CD4-positive, alpha-beta T cell (primary cell): ENCODE measurements at regions of chr21 and their contacts with region 1.

Region 1: DNA sequence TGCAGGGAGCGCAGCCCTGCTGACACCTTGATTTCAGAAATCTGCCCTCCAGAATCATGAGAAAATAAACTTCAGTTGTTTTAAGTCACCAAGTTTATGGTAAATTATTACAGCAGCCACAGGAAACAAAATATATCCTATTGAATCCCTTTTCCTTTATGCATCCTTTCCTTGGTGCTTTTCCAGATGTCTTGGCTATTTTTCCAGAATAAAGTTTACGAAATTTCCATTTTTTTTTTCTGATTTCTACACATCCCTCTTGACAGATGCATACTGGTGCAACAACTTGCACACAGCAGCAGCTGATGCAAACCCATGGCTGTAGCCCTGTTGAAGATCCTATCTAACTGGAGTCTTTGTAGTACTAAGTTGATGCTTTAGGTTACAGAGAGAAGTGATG is 111.1 kb upstream of the KCNE2 start:
- DNase-seq: no peak
- ATAC-seq: no peak
- H3K4me3 ChIP-seq: no peak overlapping the region
- H3K4me3 Mint-ChIP-seq: no peak overlapping the region
- H3K27ac ChIP-seq: no peak overlapping the region
- H3K27ac Mint-ChIP-seq: no peak overlapping the region
- H3K4me1 ChIP-seq: no peaks in the 10 kb centered on the region
- H3K4me1 Mint-ChIP-seq: no peaks in the 10 kb centered on the region
- H3K27me3 ChIP-seq: no peaks in the 10 kb centered on the region
- H3K27me3 Mint-ChIP-seq: no peaks in the 10 kb centered on the region
- CTCF ChIP-seq: no peak

Region 2: GRCh38 chr21:33915368-33916199 is 337.2 kb before region 1 on chr21 and contains the start of gene ATP5PO:
- CTCF ChIA-PET with region 1: no interaction called
- POLR2A ChIA-PET with region 1: no interaction called
- intact Hi-C with region 1: no loop called
- DNase-seq: peak; percentile 89 to 98 (median 94)
- ATAC-seq: peak; percentile 99
- H3K4me3 ChIP-seq: peak within 1 kb of the TSS; percentile 75
- H3K4me3 Mint-ChIP-seq: peak within 1 kb of the TSS; percentile 97
- H3K27ac ChIP-seq: peak within 1 kb of the TSS; percentile 37 to 66
- H3K27ac Mint-ChIP-seq: peak within 1 kb of the TSS; percentile 92
- H3K4me1 ChIP-seq: peaks cover 19% of the 10 kb centered on the region
- H3K4me1 Mint-ChIP-seq: peaks cover 38% of the 10 kb centered on the region
- H3K27me3 ChIP-seq: no peaks in the 10 kb centered on the region
- H3K27me3 Mint-ChIP-seq: no peaks in the 10 kb centered on the region
- CTCF ChIP-seq: no peak
- total RNA-seq, gene ATP5PO: 143 to 149 TPM

Region 3: GRCh38 chr21:34112316-34113033 is 140.3 kb before region 1 on chr21:
- CTCF ChIA-PET with region 1: no interaction called
- POLR2A ChIA-PET with region 1: no interaction called
- intact Hi-C with region 1: no loop called
- DNase-seq: no peak
- ATAC-seq: no peak
- H3K4me3 ChIP-seq: no peak overlapping the region
- H3K4me3 Mint-ChIP-seq: no peak overlapping the region
- H3K27ac ChIP-seq: no peak overlapping the region
- H3K27ac Mint-ChIP-seq: peak overlapping the region; percentile 5
- H3K4me1 ChIP-seq: no peaks in the 10 kb centered on the region
- H3K4me1 Mint-ChIP-seq: peaks cover 74% of the 10 kb centered on the region
- H3K27me3 ChIP-seq: no peaks in the 10 kb centered on the region
- H3K27me3 Mint-ChIP-seq: no peaks in the 10 kb centered on the region
- CTCF ChIP-seq: no peak

Region 4: DNA sequence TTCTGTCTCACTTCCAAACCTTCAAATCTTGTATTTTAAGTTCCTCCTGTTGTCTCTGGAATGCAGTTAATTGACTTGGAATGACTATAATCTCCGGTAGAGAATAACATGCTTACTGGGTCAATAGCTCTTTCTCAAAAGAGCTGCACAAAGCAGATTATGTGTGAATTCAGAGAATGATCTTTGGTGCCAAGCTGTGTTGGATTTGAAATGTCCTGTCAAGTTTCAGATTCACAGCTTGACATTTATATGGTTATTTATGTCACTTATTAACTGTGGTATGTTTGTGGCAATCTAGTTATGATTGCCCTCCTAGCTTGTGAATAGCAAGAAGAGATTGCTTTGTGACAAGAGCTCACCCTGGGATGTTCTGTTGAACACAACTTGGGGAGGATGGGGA is 17.2 kb before region 1 on chr21:
- CTCF ChIA-PET with region 1: no interaction called
- POLR2A ChIA-PET with region 1: no interaction called
- intact Hi-C with region 1: no loop called
- DNase-seq: no peak
- ATAC-seq: no peak
- H3K4me3 ChIP-seq: no peak overlapping the region
- H3K4me3 Mint-ChIP-seq: no peak overlapping the region
- H3K27ac ChIP-seq: no peak overlapping the region
- H3K27ac Mint-ChIP-seq: no peak overlapping the region
- H3K4me1 ChIP-seq: no peaks in the 10 kb centered on the region
- H3K4me1 Mint-ChIP-seq: no peaks in the 10 kb centered on the region
- H3K27me3 ChIP-seq: no peaks in the 10 kb centered on the region
- H3K27me3 Mint-ChIP-seq: peaks cover 8% of the 10 kb centered on the region
- CTCF ChIP-seq: no peak

Region 5: GRCh38 chr21:34313116-34313515 is 60.4 kb after region 1 on chr21:
- CTCF ChIA-PET with region 1: no interaction called
- POLR2A ChIA-PET with region 1: no interaction called
- intact Hi-C with region 1: loop called in 1 of 2 experiments (anchors 10 kb)
- DNase-seq: no peak
- ATAC-seq: no peak
- H3K4me3 ChIP-seq: no peak overlapping the region
- H3K4me3 Mint-ChIP-seq: no peak overlapping the region
- H3K27ac ChIP-seq: no peak overlapping the region
- H3K27ac Mint-ChIP-seq: no peak overlapping the region
- H3K4me1 ChIP-seq: no peaks in the 10 kb centered on the region
- H3K4me1 Mint-ChIP-seq: no peaks in the 10 kb centered on the region
- H3K27me3 ChIP-seq: no peaks in the 10 kb centered on the region
- H3K27me3 Mint-ChIP-seq: peaks cover 16% of the 10 kb centered on the region
- CTCF ChIP-seq: no peak